Natural killer cell (primary cell): ENCODE measurements at regions of chr20 and their contacts with region 1.

Region 1: DNA sequence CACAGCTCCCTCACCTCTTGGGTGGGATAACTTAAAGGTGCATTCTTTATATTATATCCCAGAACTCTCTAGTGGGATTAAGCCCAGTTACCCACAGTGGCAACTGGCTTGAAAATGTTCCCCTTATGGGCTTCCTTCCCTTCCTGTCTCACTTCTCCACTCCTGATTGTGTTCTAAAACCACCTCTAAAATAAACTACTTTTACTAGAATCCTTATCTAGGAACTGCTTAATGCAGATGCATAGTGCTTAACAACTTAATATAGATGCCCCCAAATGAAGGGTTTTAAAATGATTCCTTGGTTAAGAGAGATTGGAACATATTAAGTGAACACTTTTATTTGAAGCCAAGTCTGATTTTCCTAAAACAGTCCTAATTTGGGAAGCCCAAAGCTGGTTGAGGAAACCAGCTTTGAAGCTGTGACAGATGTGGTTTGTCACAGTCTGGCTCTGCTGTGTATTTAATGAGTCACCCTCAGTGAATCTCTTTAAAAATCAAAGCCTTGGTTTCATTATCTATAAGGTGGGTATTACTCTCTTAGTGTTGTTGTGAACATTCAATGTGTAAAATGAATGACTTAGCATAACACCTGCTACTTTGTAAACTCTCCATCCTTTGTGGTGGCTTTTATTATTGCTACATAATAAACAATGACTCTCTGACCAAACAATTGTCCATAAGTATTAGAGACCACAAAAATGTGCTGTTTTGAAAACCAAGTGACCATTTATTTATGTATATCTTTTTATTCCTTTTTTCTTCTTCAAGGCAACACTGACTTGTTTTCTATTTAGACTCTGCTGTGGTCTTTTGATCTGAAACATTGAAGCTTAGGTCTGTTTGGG is 24.4 kb downstream of the PLCB1 start:
- DNase-seq: peak in 1 of 2 donors; percentile 63
- ATAC-seq: peak; percentile 81 to 89 (median 86)
- H3K4me3 ChIP-seq: no peak overlapping the region
- H3K4me3 Mint-ChIP-seq: peak overlapping the region; percentile 55
- H3K27ac ChIP-seq: no peak overlapping the region
- H3K27ac Mint-ChIP-seq: peak overlapping the region; percentile 81 to 83
- H3K4me1 ChIP-seq: peaks cover 25% of the 10 kb centered on the region
- H3K4me1 Mint-ChIP-seq: peaks cover 75% of the 10 kb centered on the region in 2 donors
- H3K27me3 ChIP-seq: no peaks in the 10 kb centered on the region
- H3K27me3 Mint-ChIP-seq: no peaks in the 10 kb centered on the region
- CTCF ChIP-seq: no peak

Region 2: DNA sequence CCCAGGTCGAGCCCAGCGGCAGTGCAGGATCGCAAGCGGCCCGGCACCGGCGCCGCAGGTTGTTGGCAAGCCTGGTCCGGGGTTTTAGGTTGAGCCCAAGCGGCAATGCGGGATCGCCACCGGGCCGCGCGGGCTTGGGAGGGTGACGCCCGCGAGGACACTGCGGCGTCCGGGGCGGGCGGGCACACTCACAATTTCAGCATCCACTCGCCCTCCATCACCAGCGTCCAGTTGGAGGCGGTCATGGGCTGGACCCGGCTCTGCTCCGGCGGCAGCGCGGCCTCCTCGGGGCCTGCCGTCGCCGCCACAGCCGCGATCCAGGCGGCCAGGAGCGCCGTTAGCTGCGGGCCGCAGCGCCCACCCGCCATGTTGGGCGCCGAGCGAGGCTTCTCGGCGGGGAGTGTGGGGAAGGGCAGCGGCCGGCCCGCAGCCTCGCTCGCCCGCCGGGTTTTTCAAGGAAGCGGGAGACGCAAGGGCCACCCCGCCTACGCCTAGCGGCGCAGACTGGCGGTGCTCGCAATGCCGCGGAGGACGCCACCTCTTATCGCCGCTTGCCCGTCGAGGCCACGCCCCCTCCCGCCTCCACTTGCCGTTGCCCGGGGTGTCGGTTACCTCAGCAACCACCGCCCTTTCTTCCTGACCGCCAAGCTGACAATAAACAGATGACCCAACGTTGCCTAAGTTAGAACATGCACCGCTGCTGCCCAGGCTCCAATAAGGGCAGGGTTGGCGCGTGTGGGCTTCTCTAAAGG is 137.0 kb before region 1 on chr20 and contains the start of gene TMX4:
- intact Hi-C with region 1: loop called (anchors 5 kb)
- DNase-seq: peak; percentile 92 to 93
- ATAC-seq: peak; percentile 83 to 95 (median 88)
- H3K4me3 ChIP-seq: peak within 1 kb of the TSS; percentile 79
- H3K4me3 Mint-ChIP-seq: peak within 1 kb of the TSS; percentile 94
- H3K27ac ChIP-seq: peak within 1 kb of the TSS; percentile 91
- H3K27ac Mint-ChIP-seq: peak within 1 kb of the TSS in 1 of 2 donors; percentile 90
- H3K4me1 ChIP-seq: peaks cover 8% of the 10 kb centered on the region
- H3K4me1 Mint-ChIP-seq: peaks cover 37 to 44% of the 10 kb centered on the region in 2 donors
- H3K27me3 ChIP-seq: no peaks in the 10 kb centered on the region
- H3K27me3 Mint-ChIP-seq: peaks cover 0 to 2% of the 10 kb centered on the region in 2 donors
- CTCF ChIP-seq: no peak
- total RNA-seq, gene TMX4: 94.4 to 97.9 (median 94.5) TPM

Region 3: GRCh38 chr20:8213831-8214587 is 57.6 kb after region 1 on chr20:
- intact Hi-C with region 1: loop called (anchors 5 kb)
- DNase-seq: peak in 1 of 2 donors; percentile 56
- ATAC-seq: peak; percentile 76 to 87 (median 82)
- H3K4me3 ChIP-seq: peak overlapping the region; percentile 28
- H3K4me3 Mint-ChIP-seq: peak overlapping the region; percentile 86
- H3K27ac ChIP-seq: peak overlapping the region; percentile 50
- H3K27ac Mint-ChIP-seq: peak overlapping the region; percentile 70 to 93
- H3K4me1 ChIP-seq: peaks cover 19% of the 10 kb centered on the region
- H3K4me1 Mint-ChIP-seq: peaks cover 55 to 70% of the 10 kb centered on the region in 2 donors
- H3K27me3 ChIP-seq: no peaks in the 10 kb centered on the region
- H3K27me3 Mint-ChIP-seq: no peaks in the 10 kb centered on the region
- CTCF ChIP-seq: no peak

Region 4: DNA sequence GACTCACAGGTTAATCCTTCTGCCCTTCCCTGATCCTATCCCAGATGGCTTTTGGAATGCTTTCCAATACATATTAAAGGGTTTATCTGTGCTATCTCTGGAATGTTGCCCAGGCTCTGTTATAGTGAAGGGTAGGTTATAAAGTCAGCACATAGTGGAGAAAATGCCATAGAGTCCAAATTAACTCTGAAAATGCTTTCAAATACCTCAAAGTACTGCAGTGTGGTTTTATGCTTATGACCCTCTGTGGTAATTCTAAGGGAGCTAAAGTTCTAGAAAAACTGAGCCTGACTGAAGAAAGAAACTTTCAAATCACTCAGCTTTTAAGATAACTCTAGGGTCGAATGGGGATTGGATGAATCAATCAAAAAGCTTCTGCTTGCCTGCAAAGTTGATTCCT is 135.4 kb after region 1 on chr20:
- intact Hi-C with region 1: loop called (anchors 5 kb)
- DNase-seq: no peak
- ATAC-seq: no peak
- H3K4me3 ChIP-seq: no peak overlapping the region
- H3K4me3 Mint-ChIP-seq: no peak overlapping the region
- H3K27ac ChIP-seq: no peak overlapping the region
- H3K27ac Mint-ChIP-seq: no peak overlapping the region
- H3K4me1 ChIP-seq: no peaks in the 10 kb centered on the region
- H3K4me1 Mint-ChIP-seq: peaks cover 19 to 34% of the 10 kb centered on the region in 2 donors
- H3K27me3 ChIP-seq: no peaks in the 10 kb centered on the region
- H3K27me3 Mint-ChIP-seq: peaks cover 8 to 9% of the 10 kb centered on the region in 2 donors
- CTCF ChIP-seq: no peak